ENCODE measurements at regions of chr7 and their contacts with region 1.

Region 1: DNA sequence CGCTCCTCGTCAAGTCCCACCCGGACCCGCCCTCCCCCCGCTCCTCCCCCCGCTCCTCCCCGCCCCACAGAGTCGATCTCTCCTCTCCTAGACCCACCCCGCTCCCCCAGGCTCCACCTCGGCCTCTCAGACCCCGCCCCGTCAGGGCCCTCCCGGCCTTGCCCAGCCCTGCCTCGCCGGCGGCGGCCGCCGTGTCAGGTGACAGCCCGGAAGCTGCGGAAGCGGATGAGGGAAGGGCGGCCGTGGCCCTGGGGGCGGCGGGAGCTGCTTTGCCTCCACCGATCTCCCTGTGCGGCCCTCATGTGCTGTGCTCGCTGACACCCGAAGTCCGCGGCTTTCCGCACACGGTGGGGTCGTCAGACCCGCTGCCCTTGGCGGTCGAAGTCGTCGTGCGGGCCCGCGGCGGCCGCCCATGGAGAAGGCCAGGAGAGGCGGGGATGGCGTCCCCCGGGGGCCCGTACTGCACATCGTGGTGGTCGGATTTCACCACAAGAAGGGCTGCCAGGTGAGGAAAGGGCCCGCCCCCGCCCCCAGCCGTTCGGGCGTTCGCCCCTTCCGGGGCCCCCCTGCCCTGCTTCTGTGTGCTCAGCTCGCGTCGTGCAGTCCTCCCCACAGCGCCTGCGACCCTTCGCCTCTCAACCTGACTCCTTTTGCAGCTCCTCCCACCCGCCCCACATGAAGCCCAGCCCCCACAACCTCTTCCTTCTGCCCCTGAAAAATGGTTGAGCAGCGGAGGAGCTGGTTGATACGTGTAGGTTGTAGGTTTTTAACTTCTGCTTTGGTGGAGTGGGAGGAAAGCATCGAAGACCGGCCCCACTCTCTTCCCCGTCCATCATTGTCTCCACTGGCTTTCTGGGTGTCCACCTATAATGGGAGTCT is at the start of gene AVL9:
- DNase-seq: peak; percentile 97
- ATAC-seq: peak; percentile 96
- H3K4me3 ChIP-seq: peak within 1 kb of the TSS; percentile 65 to 97 (median 91)
- H3K4me3 Mint-ChIP-seq: peak within 1 kb of the TSS; percentile 84
- H3K27ac ChIP-seq: peak within 1 kb of the TSS; percentile 85 to 98
- H3K27ac Mint-ChIP-seq: peak within 1 kb of the TSS; percentile 96
- H3K4me1 ChIP-seq: peaks cover 14 to 16% of the 10 kb centered on the region in 2 donors
- H3K4me1 Mint-ChIP-seq: peaks cover 36% of the 10 kb centered on the region
- H3K27me3 ChIP-seq: no peaks in the 10 kb centered on the region
- H3K27me3 Mint-ChIP-seq: no peaks in the 10 kb centered on the region
- CTCF ChIP-seq: no peak
- total RNA-seq, gene AVL9: 48.0 and 63.3 TPM in 2 replicates

Region 2: GRCh38 chr7:30594549-30595435 is 1900.7 kb before region 1 on chr7 and contains the start of gene GARS1:
- CTCF ChIA-PET with region 1: no interaction called
- POLR2A ChIA-PET with region 1: no interaction called
- intact Hi-C with region 1: loop called (anchors 10 kb)
- DNase-seq: peak; percentile 95
- ATAC-seq: peak; percentile 88
- H3K4me3 ChIP-seq: peak within 1 kb of the TSS; percentile 69 to 98 (median 93)
- H3K4me3 Mint-ChIP-seq: peak within 1 kb of the TSS; percentile 95
- H3K27ac ChIP-seq: peak within 1 kb of the TSS; percentile 89 to 98
- H3K27ac Mint-ChIP-seq: peak within 1 kb of the TSS; percentile 97
- H3K4me1 ChIP-seq: peaks cover 21 to 24% of the 10 kb centered on the region in 2 donors
- H3K4me1 Mint-ChIP-seq: peaks cover 57% of the 10 kb centered on the region
- H3K27me3 ChIP-seq: no peaks in the 10 kb centered on the region
- H3K27me3 Mint-ChIP-seq: no peaks in the 10 kb centered on the region
- CTCF ChIP-seq: no peak
- total RNA-seq, gene GARS1: 56.1 and 61.7 TPM in 2 replicates

Region 3: GRCh38 chr7:32525839-32526238 is 30.3 kb after region 1 on chr7:
- CTCF ChIA-PET with region 1: no interaction called
- POLR2A ChIA-PET with region 1: no interaction called
- intact Hi-C with region 1: no loop called
- DNase-seq: no peak
- ATAC-seq: no peak
- H3K4me3 ChIP-seq: no peak overlapping the region
- H3K4me3 Mint-ChIP-seq: no peak overlapping the region
- H3K27ac ChIP-seq: no peak overlapping the region
- H3K27ac Mint-ChIP-seq: no peak overlapping the region
- H3K4me1 ChIP-seq: no peaks in the 10 kb centered on the region
- H3K4me1 Mint-ChIP-seq: peaks cover 7% of the 10 kb centered on the region
- H3K27me3 ChIP-seq: no peaks in the 10 kb centered on the region
- H3K27me3 Mint-ChIP-seq: no peaks in the 10 kb centered on the region
- CTCF ChIP-seq: no peak

Region 4: DNA sequence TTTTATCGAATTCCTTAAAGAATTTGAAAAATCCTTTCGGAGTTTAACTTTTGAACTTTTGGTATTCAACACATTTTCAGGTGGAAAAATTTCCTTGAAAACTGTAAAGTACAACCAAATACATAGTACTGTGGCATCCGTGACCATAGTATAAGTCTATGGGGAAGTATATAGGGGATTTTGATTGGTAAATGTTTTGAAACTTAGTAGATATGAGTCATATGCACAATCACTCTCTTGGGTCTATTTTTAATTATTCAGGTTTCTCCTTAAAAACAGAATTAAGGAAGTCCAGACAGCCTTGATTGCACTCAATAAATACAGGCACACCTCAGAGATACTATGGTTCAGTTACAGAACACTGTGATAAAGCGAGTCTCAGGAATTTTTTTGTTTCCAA is 63.9 kb after region 1 on chr7:
- CTCF ChIA-PET with region 1: no interaction called
- POLR2A ChIA-PET with region 1: no interaction called
- intact Hi-C with region 1: loop called (anchors 5 kb)
- DNase-seq: no peak
- ATAC-seq: no peak
- H3K4me3 ChIP-seq: no peak overlapping the region
- H3K4me3 Mint-ChIP-seq: no peak overlapping the region
- H3K27ac ChIP-seq: no peak overlapping the region
- H3K27ac Mint-ChIP-seq: no peak overlapping the region
- H3K4me1 ChIP-seq: no peaks in the 10 kb centered on the region
- H3K4me1 Mint-ChIP-seq: no peaks in the 10 kb centered on the region
- H3K27me3 ChIP-seq: no peaks in the 10 kb centered on the region
- H3K27me3 Mint-ChIP-seq: no peaks in the 10 kb centered on the region
- CTCF ChIP-seq: no peak

Region 5: GRCh38 chr7:33128990-33129805 is 633.7 kb after region 1 on chr7 and contains the start of gene BBS9:
- CTCF ChIA-PET with region 1: no interaction called
- POLR2A ChIA-PET with region 1: no interaction called
- intact Hi-C with region 1: loop called (anchors 1 kb)
- DNase-seq: peak; percentile 96
- ATAC-seq: peak; percentile 91
- H3K4me3 ChIP-seq: peak within 1 kb of the TSS; percentile 39 to 81 (median 62)
- H3K4me3 Mint-ChIP-seq: peak within 1 kb of the TSS; percentile 97
- H3K27ac ChIP-seq: peak within 1 kb of the TSS; percentile 22 to 79
- H3K27ac Mint-ChIP-seq: peak within 1 kb of the TSS; percentile 91
- H3K4me1 ChIP-seq: peaks cover 7 to 9% of the 10 kb centered on the region in 2 donors
- H3K4me1 Mint-ChIP-seq: peaks cover 24% of the 10 kb centered on the region
- H3K27me3 ChIP-seq: no peaks in the 10 kb centered on the region
- H3K27me3 Mint-ChIP-seq: no peaks in the 10 kb centered on the region
- CTCF ChIP-seq: peak; percentile 18
- total RNA-seq, gene BBS9: 45.2 and 48.4 TPM in 2 replicates

Measured in B cell (primary cell).